CD4-positive, alpha-beta memory T cell (primary cell): ENCODE measurements at regions of chr15 and their contacts with region 1.

Region 1: DNA sequence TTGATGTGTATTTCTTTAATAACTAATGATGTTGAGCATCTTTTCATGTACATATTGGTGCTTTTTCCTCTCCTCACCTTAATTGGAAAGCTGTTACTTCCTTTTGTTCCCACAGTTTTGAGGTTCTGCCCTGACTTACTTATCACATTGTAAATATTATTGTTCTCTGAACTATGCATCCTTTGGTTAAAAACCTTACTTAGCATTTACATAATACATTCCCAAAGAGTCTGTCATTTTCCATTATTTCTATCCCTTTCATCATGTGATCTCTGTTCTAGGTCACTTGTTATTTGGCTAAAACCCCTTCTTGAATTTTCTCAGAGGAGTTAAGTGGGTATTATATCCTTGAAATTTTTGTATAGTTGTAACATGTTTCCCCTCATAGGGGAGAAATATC is 33.0 kb downstream of the SLC12A6 start:
- DNase-seq: no peak
- H3K4me3 ChIP-seq: no peak overlapping the region
- H3K4me3 Mint-ChIP-seq: no peak overlapping the region
- H3K27ac ChIP-seq: no peak overlapping the region
- H3K27ac Mint-ChIP-seq: peak overlapping the region in 2 of 7 donors; percentile 35 to 65
- H3K4me1 ChIP-seq: no peaks in the 10 kb centered on the region
- H3K4me1 Mint-ChIP-seq: peaks cover 17 to 41% (median 33%) of the 10 kb centered on the region in 4 donors
- H3K27me3 ChIP-seq: no peaks in the 10 kb centered on the region
- H3K27me3 Mint-ChIP-seq: no peaks in the 10 kb centered on the region

Region 2: GRCh38 chr15:34241372-34242330 is 63.0 kb before region 1 on chr15:
- CTCF ChIA-PET with region 1: no interaction called
- POLR2A ChIA-PET with region 1: no interaction called
- intact Hi-C with region 1: no loop called
- DNase-seq: peak; percentile 42 to 56 (median 55)
- H3K4me3 ChIP-seq: no peak overlapping the region
- H3K4me3 Mint-ChIP-seq: no peak overlapping the region
- H3K27ac ChIP-seq: no peak overlapping the region
- H3K27ac Mint-ChIP-seq: peak overlapping the region in 4 of 7 donors; percentile 4 to 53 (median 46)
- H3K4me1 ChIP-seq: no peaks in the 10 kb centered on the region
- H3K4me1 Mint-ChIP-seq: no peaks in the 10 kb centered on the region
- H3K27me3 ChIP-seq: no peaks in the 10 kb centered on the region
- H3K27me3 Mint-ChIP-seq: no peaks in the 10 kb centered on the region

Region 3: GRCh38 chr15:34252545-34252944 is 52.1 kb before region 1 on chr15:
- CTCF ChIA-PET with region 1: no interaction called
- POLR2A ChIA-PET with region 1: no interaction called
- intact Hi-C with region 1: loop called (anchors 5 kb)
- DNase-seq: no peak
- H3K4me3 ChIP-seq: no peak overlapping the region
- H3K4me3 Mint-ChIP-seq: no peak overlapping the region
- H3K27ac ChIP-seq: no peak overlapping the region
- H3K27ac Mint-ChIP-seq: no peak overlapping the region
- H3K4me1 ChIP-seq: no peaks in the 10 kb centered on the region
- H3K4me1 Mint-ChIP-seq: peaks cover 0 to 3% (median 1%) of the 10 kb centered on the region in 4 donors
- H3K27me3 ChIP-seq: no peaks in the 10 kb centered on the region
- H3K27me3 Mint-ChIP-seq: no peaks in the 10 kb centered on the region

Region 4: GRCh38 chr15:34461730-34462129 is 157.1 kb after region 1 on chr15:
- CTCF ChIA-PET with region 1: no interaction called
- POLR2A ChIA-PET with region 1: no interaction called
- intact Hi-C with region 1: no loop called
- DNase-seq: no peak
- H3K4me3 ChIP-seq: no peak overlapping the region
- H3K4me3 Mint-ChIP-seq: no peak overlapping the region
- H3K27ac ChIP-seq: no peak overlapping the region
- H3K27ac Mint-ChIP-seq: no peak overlapping the region
- H3K4me1 ChIP-seq: no peaks in the 10 kb centered on the region
- H3K4me1 Mint-ChIP-seq: no peaks in the 10 kb centered on the region
- H3K27me3 ChIP-seq: no peaks in the 10 kb centered on the region
- H3K27me3 Mint-ChIP-seq: peaks cover 5 to 9% of the 10 kb centered on the region in 2 donors